ENCODE measurements at regions of chr15 and their contacts with region 1.

Region 1: DNA sequence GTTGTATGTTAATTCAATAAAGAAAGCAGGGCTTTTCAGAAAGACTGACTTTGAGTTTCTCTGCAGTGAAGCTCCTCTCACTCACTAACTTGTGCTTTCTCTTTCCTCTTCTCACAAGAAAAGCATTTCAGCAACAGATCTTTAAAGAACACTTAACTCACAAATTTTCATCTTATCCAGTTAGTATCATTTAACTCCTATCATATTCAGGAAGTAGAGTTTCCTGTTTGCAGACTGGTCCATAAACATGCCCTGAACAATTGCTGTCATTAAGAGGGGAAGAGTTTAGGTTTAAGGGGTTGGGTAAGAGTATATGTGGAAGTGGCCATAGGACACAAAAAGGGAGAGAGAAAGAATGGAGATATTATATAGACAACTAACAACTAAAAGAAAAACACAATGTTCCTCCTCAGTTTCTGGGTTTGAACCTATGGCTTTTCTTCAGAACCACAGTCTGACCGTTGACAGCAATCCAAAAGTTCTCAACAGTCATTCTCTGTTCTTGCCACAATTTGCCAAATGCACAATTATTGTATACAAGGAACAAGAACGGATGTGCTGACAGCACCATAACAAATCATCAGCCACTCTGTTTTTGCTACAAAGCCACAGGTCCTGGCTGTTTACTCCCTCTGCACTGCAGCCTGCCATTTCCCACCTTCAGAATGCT is 63.9 kb downstream of the CHAC1 start:
- DNase-seq: no peak
- H3K4me3 Mint-ChIP-seq: no peak overlapping the region
- H3K27ac Mint-ChIP-seq: peak overlapping the region; percentile 70
- H3K4me1 Mint-ChIP-seq: peaks cover 26% of the 10 kb centered on the region
- H3K27me3 Mint-ChIP-seq: no peaks in the 10 kb centered on the region

Region 2: GRCh38 chr15:40928821-40929659 is 88.2 kb before region 1 on chr15 and contains the start of gene DLL4:
- intact Hi-C with region 1: no loop called
- DNase-seq: no peak
- H3K4me3 Mint-ChIP-seq: peak within 1 kb of the TSS; percentile 74
- H3K27ac Mint-ChIP-seq: peak within 1 kb of the TSS; percentile 65
- H3K4me1 Mint-ChIP-seq: peaks cover 45% of the 10 kb centered on the region
- H3K27me3 Mint-ChIP-seq: peaks cover 66% of the 10 kb centered on the region
- total RNA-seq, gene DLL4: 0.29 and 0.36 TPM in 2 replicates

Region 3: DNA sequence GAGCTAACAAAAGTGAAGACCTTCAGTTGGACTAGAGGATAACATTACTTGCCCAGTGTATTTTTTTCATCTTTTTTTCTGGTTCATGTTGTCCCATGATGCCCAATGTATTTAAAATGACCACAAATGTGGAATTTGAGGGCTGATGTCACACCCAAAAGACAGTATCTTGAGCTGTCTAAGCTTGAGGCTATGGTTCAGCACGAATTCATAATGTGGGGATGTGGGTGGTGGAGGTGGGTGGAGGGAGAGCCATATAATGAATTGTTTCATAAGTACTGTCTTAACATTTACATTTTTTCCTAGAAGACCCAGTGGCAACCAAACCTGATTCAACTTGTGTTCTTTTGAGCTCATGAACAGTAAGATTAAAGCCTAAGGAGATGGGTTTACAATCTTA is 26.4 kb before region 1 on chr15:
- intact Hi-C with region 1: loop called (anchors 2 kb)
- DNase-seq: no peak
- H3K4me3 Mint-ChIP-seq: no peak overlapping the region
- H3K27ac Mint-ChIP-seq: peak overlapping the region; percentile 3
- H3K4me1 Mint-ChIP-seq: peaks cover 24% of the 10 kb centered on the region
- H3K27me3 Mint-ChIP-seq: no peaks in the 10 kb centered on the region

Measured in activated T-helper 1 cell treated with anti-CD3 and anti-CD28 coated beads, Interleukin-12 subunit alpha, Interleukin-12 subunit beta, Interleukin-2, Interleukin-4 antibody, amounts not matched to agents 30 ng/mL and 10 ng/mL and 1 ng/mL, durations not matched to agents 14 hours and 24 hours and 36 hours (primary cell).